ENCODE measurements at regions of chr16 and their contacts with region 1.

Region 1: DNA sequence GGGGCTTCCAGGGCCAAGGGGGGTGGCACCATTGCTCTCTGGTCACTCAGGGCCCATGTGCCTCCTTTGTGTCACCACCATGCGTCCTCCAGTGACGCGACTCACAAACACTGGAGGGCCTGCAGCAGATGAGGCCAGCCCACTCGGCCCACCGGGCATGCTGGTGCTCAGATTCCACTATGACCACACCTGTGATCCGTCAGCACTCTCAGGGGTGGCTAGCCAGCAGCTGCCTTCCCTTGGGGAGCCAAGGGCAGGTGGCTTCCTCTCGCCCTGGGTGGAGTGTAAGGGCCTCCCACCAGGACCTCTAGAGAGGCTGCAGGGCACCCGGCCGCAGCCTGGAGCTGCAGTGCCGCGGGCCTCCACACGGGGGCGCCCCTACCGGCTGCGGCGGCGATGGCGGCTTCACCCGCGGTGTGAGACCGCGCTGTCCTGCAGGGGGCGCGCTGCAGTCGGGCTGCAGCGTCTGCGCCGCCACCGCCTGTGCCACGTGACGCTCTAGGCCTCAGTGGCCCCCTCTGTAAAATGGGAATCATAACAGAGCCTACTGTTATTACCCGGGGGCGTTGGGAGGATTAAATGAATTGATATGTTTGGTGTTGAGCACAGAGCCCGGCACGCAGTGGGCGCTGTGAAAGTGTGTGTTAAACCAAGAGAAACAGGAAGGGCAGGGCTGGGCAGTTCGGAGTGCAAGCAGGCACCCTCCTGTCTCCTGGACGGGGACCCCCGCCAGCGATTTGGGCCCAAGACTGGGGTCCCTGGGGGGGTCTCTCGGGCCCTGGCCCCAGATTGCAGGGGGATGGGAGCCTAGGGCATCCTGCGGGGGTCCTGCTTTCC is 192.4 kb upstream of the GSE1 start:
- H3K4me3 ChIP-seq: no peak overlapping the region
- H3K27ac ChIP-seq: no peak overlapping the region
- H3K4me1 ChIP-seq: no peaks in the 10 kb centered on the region; the same call in 1 of the 2 replicates
- CTCF ChIP-seq: peak; percentile 96

Region 2: DNA sequence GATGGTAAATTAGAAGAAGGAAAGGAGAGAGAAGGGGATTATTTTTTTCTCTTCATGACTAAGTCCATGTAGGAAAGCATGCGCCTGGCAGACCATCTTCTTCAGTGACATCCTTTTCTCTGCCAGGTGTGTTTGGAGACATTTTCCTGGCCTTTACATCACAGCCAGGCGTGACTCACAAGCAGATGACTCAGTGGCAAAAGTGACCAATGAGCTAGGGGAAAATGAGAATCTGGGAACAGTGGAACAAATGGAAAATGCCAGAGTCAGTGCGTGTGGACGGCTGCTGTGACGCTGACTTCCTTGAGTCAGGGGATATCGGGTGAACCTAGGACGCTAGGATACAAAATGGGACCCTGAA is 383.7 kb before region 1 on chr16:
- CTCF ChIA-PET with region 1: no interaction called
- POLR2A ChIA-PET with region 1: no interaction called
- H3K4me3 ChIP-seq: no peak overlapping the region
- H3K27ac ChIP-seq: no peak overlapping the region
- H3K4me1 ChIP-seq: peaks cover 3% of the 10 kb centered on the region; the same call in 1 of the 2 replicates
- CTCF ChIP-seq: no peak

Region 3: GRCh38 chr16:85402910-85403692 is 17.6 kb before region 1 on chr16:
- CTCF ChIA-PET with region 1: interaction called, 13 read pairs
- POLR2A ChIA-PET with region 1: no interaction called
- H3K4me3 ChIP-seq: no peak overlapping the region
- H3K27ac ChIP-seq: no peak overlapping the region
- H3K4me1 ChIP-seq: peaks cover 5% of the 10 kb centered on the region
- CTCF ChIP-seq: no peak

Region 4: GRCh38 chr16:85471444-85472431 is 51.0 kb after region 1 on chr16:
- CTCF ChIA-PET with region 1: interaction called, 13 read pairs
- POLR2A ChIA-PET with region 1: interaction called, 4 read pairs
- H3K4me3 ChIP-seq: no peak overlapping the region
- H3K27ac ChIP-seq: no peak overlapping the region
- H3K4me1 ChIP-seq: peaks cover 11% of the 10 kb centered on the region
- CTCF ChIP-seq: no peak

Region 5: DNA sequence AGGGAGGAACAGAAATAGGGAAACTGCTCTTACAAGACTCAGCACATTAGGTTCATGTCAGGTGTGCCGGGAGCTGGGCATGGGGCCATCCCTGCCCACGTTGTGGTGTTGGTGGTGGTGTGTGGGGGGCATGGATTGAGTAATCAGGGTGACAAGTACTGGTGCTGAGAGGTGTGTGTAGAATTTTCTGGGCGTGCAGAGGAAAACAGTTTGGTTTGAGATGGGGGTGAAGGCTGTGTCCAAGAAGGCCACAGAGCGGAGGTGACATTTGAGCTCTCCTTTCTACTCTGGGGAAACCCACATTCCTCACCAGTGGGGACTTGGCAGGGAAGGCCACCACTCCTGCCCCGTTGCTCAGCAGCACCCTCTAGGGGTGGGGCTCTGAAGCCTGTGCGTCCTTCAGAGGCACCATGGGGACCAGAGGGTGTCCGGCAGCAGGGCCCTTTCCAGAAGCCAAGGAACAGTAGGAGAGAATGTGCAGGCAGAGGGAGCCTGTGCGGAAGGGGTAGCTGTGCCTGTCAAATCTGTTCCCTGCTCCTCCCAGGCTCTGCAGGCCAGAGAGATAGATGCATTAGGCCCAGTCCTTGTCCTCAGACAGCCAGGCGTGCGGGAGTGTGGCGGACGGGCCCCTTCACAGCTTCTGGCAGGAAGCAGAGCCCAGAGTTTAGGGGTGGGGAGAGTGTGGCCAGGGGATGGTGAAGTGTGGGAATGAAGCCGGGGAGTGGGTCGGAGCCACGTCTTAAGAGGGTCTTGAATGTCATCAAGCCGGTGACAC is 143.7 kb after region 1 on chr16:
- CTCF ChIA-PET with region 1: interaction called, 10 read pairs
- POLR2A ChIA-PET with region 1: no interaction called
- H3K4me3 ChIP-seq: no peak overlapping the region
- H3K27ac ChIP-seq: no peak overlapping the region
- H3K4me1 ChIP-seq: peaks cover 21% of the 10 kb centered on the region
- CTCF ChIP-seq: peak; percentile 83

Region 6: GRCh38 chr16:85615852-85616606 is 195.3 kb after region 1 on chr16:
- CTCF ChIA-PET with region 1: interaction called, 39 read pairs
- POLR2A ChIA-PET with region 1: no interaction called
- H3K4me3 ChIP-seq: no peak overlapping the region; the same call in 1 of the 2 replicates
- H3K27ac ChIP-seq: peak overlapping the region; percentile 99
- H3K4me1 ChIP-seq: peaks cover 6% of the 10 kb centered on the region; the same call in 1 of the 2 replicates
- CTCF ChIP-seq: peak; percentile 91

Region 7: GRCh38 chr16:85639536-85640253 is 219.0 kb after region 1 on chr16:
- CTCF ChIA-PET with region 1: no interaction called
- POLR2A ChIA-PET with region 1: no interaction called
- H3K4me3 ChIP-seq: no peak overlapping the region
- H3K27ac ChIP-seq: no peak overlapping the region
- H3K4me1 ChIP-seq: no peaks in the 10 kb centered on the region
- CTCF ChIP-seq: no peak